RWPE1 (cell line): ENCODE measurements at regions of chr1 and their contacts with region 1.

Region 1: DNA sequence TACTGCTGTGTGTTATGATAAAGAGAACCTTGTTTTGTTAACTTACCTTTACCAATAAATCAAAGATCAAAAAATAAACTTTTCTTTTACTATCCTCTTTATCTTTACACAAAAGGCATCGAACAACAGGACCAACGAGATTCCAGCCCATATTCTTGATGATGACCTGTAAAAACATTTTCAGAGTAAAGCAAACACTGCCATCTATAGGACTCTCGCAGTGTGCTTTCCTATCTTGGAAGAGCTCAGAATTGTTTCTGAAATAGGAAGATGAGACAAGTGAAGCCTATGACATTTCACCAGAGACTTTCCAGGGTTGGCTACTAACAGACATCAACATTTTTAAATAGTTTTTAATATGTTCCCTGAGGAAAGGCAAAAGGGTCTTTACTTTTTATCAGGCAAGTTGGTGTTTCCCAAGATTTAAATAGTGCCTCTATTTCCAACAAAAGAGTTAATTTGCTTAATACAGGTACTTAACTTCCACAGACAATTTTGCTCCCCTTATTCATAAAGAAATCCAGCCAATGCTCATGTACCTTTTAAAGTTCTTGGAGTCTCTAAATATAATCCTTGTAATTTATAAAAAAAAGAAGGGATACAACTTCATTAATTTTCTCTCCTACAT is 7.3 kb downstream of the GLMN start:
- DNase-seq: peak; percentile 36
- H3K27ac ChIP-seq: no peak overlapping the region
- CTCF ChIP-seq: peak; percentile 81

Region 2: DNA sequence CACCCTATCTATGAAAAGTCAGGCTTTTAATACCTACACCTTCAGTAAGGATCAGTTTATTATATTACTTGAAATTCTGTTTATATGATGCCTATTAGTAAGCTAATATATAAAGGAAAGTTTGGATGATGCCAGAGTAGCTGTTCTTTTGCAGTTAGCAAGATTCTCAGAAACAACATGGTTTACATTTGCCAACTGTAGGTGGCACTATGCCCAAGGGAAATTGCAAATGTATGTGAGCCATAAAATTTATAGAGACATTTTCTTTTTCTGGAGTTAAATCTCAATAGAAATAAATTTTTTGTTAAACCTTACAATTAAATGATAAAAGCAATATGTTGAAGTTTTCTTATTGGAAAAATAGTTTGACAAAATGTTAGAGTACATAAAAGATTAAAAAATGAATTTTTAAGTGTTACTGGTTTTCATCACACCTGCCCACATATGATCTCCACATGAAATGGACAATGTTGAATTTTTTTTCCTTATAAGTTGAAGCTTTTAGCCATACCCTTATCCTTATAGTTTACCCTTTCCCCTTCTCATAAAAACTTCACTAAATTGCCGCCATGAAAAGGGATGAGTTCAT is 293.8 kb before region 1 on chr1:
- CTCF ChIA-PET with region 1: interaction called, 19 read pairs
- POLR2A ChIA-PET with region 1: no interaction called
- DNase-seq: peak; percentile 30
- H3K27ac ChIP-seq: no peak overlapping the region
- CTCF ChIP-seq: peak; percentile 68

Region 3: GRCh38 chr1:92277105-92277723 is 14.3 kb before region 1 on chr1:
- CTCF ChIA-PET with region 1: no interaction called
- POLR2A ChIA-PET with region 1: no interaction called
- DNase-seq: peak; percentile 42
- H3K27ac ChIP-seq: no peak overlapping the region
- CTCF ChIP-seq: no peak